PC-9 (cell line): ENCODE measurements at regions of chrX and their contacts with region 1.

Region 1: DNA sequence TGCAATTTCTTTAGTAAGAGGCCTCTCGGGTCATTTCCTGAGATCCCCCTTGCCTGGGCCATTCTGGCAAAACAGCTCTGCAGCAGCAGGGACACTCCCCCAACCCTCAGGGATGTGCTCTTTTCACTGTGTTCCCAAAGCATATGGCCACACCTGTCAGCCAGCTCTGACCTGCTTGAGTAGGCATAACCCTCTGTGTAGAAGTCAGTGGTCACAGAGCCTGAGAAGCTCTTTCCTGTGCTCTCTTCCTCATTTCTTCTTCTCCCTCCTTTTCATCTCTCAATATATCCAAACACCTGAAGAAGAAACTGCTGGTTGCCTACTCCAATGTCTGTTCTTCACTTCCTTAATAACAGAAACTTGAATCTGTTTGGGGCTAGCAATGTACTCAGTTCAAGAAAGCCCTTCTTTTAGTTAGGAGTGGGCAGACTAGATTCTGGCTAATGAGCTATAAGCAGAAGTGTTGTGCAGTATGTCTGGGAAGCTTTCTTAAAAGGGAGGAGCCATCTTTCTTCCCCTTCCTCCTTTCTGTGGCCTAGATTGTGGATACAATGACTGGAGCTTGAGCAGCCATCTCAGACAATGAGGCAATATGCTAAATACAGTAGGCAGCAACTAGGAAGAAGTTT is 73.3 kb downstream of the PRPS1 start:
- DNase-seq: no peak
- H3K4me3 ChIP-seq: no peak overlapping the region
- H3K27ac ChIP-seq: no peak overlapping the region
- H3K4me1 ChIP-seq: peaks cover 18% of the 10 kb centered on the region
- H3K27me3 ChIP-seq: no peaks in the 10 kb centered on the region
- CTCF ChIP-seq: no peak

Region 2: DNA sequence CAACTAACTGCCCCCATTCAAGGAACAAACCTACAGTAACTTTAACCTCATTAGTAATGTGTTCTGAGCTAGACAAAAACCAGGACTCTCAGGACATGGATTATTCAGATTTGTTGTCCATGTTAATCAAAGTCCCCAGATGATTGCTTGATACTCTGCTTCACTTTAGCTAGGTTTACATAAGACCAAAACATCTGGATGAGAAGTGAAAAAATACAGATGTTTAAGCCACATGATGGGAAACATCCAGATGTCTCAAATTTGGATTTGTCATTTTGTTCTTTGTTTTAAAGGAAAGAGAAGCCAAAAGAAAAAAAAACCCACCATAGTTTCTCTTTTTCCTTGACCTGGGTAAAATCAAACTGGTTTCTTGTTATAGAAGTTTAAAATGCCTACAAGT is 1927.8 kb before region 1 on chrX:
- CTCF ChIA-PET with region 1: no interaction called
- POLR2A ChIA-PET with region 1: interaction called, 24 read pairs
- intact Hi-C with region 1: no loop called
- DNase-seq: no peak
- H3K4me3 ChIP-seq: no peak overlapping the region
- H3K27ac ChIP-seq: no peak overlapping the region
- H3K4me1 ChIP-seq: no peaks in the 10 kb centered on the region
- H3K27me3 ChIP-seq: no peaks in the 10 kb centered on the region
- CTCF ChIP-seq: no peak

Region 3: GRCh38 chrX:107506596-107507031 is 195.0 kb before region 1 on chrX:
- CTCF ChIA-PET with region 1: no interaction called
- POLR2A ChIA-PET with region 1: no interaction called
- intact Hi-C with region 1: no loop called
- DNase-seq: no peak
- H3K4me3 ChIP-seq: no peak overlapping the region
- H3K27ac ChIP-seq: no peak overlapping the region
- H3K4me1 ChIP-seq: peaks cover 16% of the 10 kb centered on the region
- H3K27me3 ChIP-seq: no peaks in the 10 kb centered on the region
- CTCF ChIP-seq: no peak